ENCODE measurements at regions of chr9 and their contacts with region 1.

Region 1: DNA sequence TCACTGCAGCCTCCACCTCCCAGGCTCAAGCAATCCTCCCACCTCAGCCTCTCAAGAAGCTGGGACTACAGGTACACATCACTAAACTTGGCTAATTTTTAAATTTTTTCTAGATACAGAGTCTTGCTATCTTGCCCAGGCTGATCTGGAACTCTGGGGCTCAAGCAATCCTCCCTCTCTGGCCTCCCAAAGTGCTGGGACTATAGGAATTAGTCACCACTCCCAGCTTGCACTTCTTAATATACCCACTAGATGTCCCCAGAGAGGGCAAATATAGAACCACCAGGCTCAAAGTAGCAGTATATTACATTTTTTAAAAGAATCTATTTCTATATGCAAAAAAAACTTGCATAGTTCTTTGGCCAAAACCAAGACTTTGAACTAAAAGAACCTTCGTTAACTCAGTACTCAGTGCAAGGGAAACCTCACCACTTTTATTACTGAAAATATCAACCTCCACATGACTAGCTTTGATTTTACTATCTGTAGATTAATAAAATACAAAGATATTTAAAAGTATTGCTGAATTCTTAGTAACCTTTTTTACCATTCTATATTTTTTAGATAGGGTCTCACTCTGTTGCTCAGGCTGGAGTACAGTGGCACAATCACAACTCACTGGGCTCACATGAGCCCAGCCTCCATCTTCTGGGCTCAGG is 25.8 kb upstream of the HSD17B3 start:
- DNase-seq: peak; percentile 78
- H3K4me3 Mint-ChIP-seq: no peak overlapping the region
- H3K27ac Mint-ChIP-seq: no peak overlapping the region
- H3K4me1 Mint-ChIP-seq: peaks cover 7% of the 10 kb centered on the region
- H3K27me3 Mint-ChIP-seq: no peaks in the 10 kb centered on the region
- CTCF ChIP-seq: peak; percentile 83

Region 2: GRCh38 chr9:96344458-96345180 is 16.8 kb after region 1 on chr9:
- CTCF ChIA-PET with region 1: interaction called, 13 read pairs
- POLR2A ChIA-PET with region 1: interaction called, 3 read pairs
- intact Hi-C with region 1: no loop called
- DNase-seq: peak; percentile 80
- H3K4me3 Mint-ChIP-seq: no peak overlapping the region
- H3K27ac Mint-ChIP-seq: no peak overlapping the region
- H3K4me1 Mint-ChIP-seq: peaks cover 7% of the 10 kb centered on the region
- H3K27me3 Mint-ChIP-seq: no peaks in the 10 kb centered on the region
- CTCF ChIP-seq: no peak

Region 3: GRCh38 chr9:96566498-96567207 is 238.8 kb after region 1 on chr9:
- CTCF ChIA-PET with region 1: interaction called, 4 read pairs
- POLR2A ChIA-PET with region 1: no interaction called
- intact Hi-C with region 1: loop called (anchors 1 kb)
- DNase-seq: peak; percentile 63
- H3K4me3 Mint-ChIP-seq: peak overlapping the region; percentile 80
- H3K27ac Mint-ChIP-seq: peak overlapping the region; percentile 84
- H3K4me1 Mint-ChIP-seq: peaks cover 6% of the 10 kb centered on the region
- H3K27me3 Mint-ChIP-seq: no peaks in the 10 kb centered on the region
- CTCF ChIP-seq: peak; percentile 49

Region 4: DNA sequence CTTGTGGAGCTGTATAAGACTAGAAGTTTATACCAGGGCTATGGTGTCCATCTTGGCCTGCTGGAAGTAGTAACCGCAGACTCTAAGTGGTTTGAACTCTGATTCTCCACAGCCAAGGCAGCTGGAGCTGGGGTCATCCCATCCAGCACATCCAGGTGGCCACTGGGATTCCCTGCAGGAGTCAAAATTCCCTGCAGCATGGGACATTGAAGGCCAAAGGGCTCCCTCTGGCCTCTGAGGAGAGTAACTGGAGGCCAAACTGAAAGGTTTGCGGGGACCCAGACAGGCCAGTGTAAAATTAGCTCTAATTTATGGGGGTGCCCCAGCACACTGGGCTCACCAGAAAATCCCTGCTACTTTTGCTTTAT is 339.5 kb after region 1 on chr9:
- CTCF ChIA-PET with region 1: interaction called, 24 read pairs
- POLR2A ChIA-PET with region 1: interaction called, 4 read pairs
- intact Hi-C with region 1: loop called (anchors 5 kb)
- DNase-seq: no peak
- H3K4me3 Mint-ChIP-seq: no peak overlapping the region
- H3K27ac Mint-ChIP-seq: no peak overlapping the region
- H3K4me1 Mint-ChIP-seq: no peaks in the 10 kb centered on the region
- H3K27me3 Mint-ChIP-seq: no peaks in the 10 kb centered on the region
- CTCF ChIP-seq: no peak